Naive thymus-derived CD8-positive, alpha-beta T cell (primary cell): ENCODE measurements at regions of chr15 and their contacts with region 1.

Region 1: GRCh38 chr15:40769274-40770146 is at the start of gene C15orf62:
- DNase-seq: peak; percentile 33 to 83 (median 54)
- ATAC-seq: peak; percentile 64 to 73
- H3K4me3 Mint-ChIP-seq: peak within 1 kb of the TSS; percentile 57 to 82 (median 77)
- H3K27ac Mint-ChIP-seq: peak within 1 kb of the TSS; percentile 88 to 98 (median 94)
- H3K4me1 Mint-ChIP-seq: peaks cover 18 to 48% (median 43%) of the 10 kb centered on the region in 4 donors
- H3K27me3 Mint-ChIP-seq: no peaks in the 10 kb centered on the region
- polyA plus RNA-seq, gene C15orf62: 0.40 TPM in 1 of 3 donors, not detected in the others

Region 2: GRCh38 chr15:40782580-40783227 is 13.2 kb after region 1 on chr15:
- POLR2A ChIA-PET with region 1: interaction called, 12 read pairs
- DNase-seq: peak; percentile 63 to 89 (median 77)
- ATAC-seq: peak; percentile 93 to 98
- H3K4me3 Mint-ChIP-seq: no peak overlapping the region
- H3K27ac Mint-ChIP-seq: peak overlapping the region in 5 of 10 donors; percentile 18 to 71 (median 38)
- H3K4me1 Mint-ChIP-seq: peaks cover 13 to 21% (median 17%) of the 10 kb centered on the region in 4 donors
- H3K27me3 Mint-ChIP-seq: no peaks in the 10 kb centered on the region

Region 3: DNA sequence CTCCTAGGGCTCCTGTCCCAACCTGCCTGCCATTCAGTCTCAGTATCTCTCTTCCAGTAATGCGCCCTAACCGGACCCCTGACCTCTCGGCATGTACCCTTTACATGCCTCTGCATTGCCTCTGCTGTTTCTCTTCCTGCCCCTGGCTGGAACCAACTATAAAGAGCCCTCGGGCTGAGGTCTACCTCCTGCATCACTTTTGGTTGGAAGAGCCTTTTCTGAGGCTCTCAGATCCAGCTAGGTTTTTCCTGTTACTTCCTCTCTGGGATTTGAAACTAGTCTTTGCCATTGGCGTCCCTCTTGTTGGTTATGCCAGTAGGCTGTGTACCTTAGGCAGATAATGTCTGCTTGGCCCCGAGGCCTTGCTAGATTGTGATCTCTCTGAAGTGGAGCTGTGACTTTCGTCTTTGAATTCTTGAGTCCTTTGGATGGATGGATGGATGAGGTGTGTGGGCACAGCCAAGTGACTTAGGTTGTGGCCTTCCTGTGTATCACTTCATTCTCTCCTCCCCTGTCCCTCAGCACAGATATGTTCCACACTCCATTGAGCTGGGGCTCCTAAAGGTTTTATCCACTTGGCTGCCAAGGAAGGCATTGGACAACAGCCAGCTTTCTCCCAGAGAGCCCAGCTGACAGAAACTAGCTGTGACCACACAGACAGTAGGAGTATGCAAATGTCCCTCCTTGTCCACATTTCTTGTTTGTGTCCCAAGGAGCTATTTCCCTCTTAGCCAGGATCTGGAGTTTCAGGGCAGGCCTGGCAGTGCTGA is 45.6 kb after region 1 on chr15:
- POLR2A ChIA-PET with region 1: no interaction called
- DNase-seq: no peak
- ATAC-seq: no peak
- H3K4me3 Mint-ChIP-seq: no peak overlapping the region
- H3K27ac Mint-ChIP-seq: peak overlapping the region in 3 of 10 donors; percentile 33 to 57 (median 41)
- H3K4me1 Mint-ChIP-seq: peaks cover 0 to 1% (median 0%) of the 10 kb centered on the region in 4 donors
- H3K27me3 Mint-ChIP-seq: no peaks in the 10 kb centered on the region